ENCODE measurements at regions of chr1 and their contacts with region 1.

Region 1: GRCh38 chr1:27300341-27301051 is 21.5 kb upstream of the TMEM222 start:
- DNase-seq: peak; percentile 90
- CTCF ChIP-seq: peak; percentile 99

Region 2: GRCh38 chr1:27044613-27045151 is 255.8 kb before region 1 on chr1:
- CTCF ChIA-PET with region 1: interaction called, 11 read pairs
- POLR2A ChIA-PET with region 1: no interaction called
- DNase-seq: peak; percentile 87
- CTCF ChIP-seq: peak; percentile 99

Region 3: GRCh38 chr1:27111626-27112573 is 188.6 kb before region 1 on chr1:
- CTCF ChIA-PET with region 1: interaction called, 98 read pairs
- POLR2A ChIA-PET with region 1: no interaction called
- DNase-seq: peak; percentile 87
- CTCF ChIP-seq: peak; percentile 52

Region 4: DNA sequence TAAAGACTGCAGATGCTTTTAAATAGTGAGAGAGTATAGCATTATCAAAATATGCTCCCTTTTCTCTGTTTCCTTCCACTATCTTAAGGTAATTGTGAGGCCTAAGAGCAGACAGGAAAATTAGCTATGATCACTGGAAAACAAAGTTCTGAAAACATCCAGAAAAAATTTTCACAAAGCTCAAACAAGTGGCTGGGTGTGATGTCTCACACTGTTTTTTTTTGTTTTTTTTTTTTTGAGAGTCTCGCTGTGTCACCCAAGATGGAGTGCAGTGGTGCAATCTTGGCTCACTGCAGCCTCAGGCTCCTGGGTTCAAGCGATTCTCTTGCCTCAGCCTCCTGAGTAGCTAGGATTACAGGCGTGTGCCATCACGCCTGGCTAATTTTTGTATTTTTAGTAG is 58.8 kb before region 1 on chr1:
- CTCF ChIA-PET with region 1: interaction called, 11 read pairs
- POLR2A ChIA-PET with region 1: no interaction called
- DNase-seq: no peak
- CTCF ChIP-seq: no peak

Region 5: DNA sequence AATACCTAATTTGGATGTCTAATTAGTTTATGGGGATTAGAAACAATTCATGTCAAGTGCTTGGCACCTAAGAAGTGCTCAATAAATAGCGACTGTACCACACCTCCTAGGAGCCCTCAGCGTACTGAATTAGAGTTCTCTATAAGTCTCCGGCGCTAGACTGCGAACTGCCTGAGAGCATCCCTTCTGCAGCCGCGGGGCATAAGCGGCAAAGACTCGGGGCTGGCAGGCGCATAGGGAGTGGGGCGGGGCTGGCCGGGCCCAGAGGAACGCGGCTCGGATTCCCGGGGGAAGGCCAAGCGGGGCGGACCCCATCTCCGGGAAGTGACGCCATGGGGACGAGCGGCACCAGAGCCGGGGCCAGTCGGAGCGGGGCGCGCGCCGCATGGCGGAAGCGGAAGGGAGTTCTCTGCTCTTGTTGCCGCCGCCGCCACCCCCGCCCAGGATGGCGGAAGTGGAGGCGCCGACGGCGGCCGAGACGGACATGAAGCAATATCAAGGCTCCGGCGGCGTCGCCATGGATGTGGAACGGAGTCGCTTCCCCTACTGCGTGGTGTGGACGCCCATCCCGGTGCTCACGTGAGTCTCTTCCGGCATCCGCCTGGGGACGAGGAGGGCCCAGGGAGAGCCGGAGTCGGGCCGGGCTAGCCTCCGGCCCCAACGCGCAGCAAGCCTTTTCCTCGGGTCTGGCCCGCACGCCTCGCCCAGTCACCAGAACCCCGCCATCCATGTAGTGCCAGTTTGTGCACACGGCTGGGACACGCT is 21.5 kb after region 1 on chr1 and contains the start of gene TMEM222:
- CTCF ChIA-PET with region 1: interaction called, 234 read pairs
- POLR2A ChIA-PET with region 1: no interaction called
- DNase-seq: peak; percentile 99
- CTCF ChIP-seq: no peak

Region 6: DNA sequence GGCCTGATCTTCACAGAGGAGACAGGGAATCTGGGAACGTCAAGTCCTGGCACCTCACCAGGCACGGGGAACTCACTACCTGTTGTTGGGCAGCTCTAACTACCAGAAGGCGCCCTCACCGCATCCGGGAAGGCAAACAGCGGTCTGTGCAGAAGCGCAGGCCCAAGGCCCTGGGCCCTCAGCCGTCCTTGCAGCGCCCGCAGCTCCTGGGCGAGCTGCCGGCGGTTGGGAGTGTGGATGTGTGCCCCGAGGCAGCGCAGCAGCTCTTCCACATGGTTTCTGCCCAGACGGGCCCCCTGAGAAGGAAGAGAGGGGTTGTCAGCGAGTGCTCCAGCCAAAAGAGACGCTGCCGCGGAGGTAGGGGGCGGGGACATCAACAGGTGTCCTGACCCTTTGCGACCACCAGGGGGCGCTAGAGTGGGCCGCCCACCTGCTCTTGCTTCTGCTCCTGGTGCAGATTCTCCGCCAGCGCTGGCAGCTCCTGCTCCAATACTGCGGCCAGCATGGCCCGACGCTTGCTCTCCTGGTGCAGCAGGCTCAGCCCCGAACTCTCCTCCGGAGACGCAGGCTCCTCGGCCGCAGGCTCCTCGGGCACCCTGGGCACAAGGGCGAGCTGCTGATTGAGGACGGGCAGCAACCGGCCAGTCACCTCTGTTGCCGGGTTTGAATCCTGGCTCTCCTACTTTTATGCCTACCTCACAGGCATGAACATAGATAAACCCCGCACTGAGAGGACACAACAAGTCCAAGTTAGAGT is 57.0 kb after region 1 on chr1:
- CTCF ChIA-PET with region 1: interaction called, 26 read pairs
- POLR2A ChIA-PET with region 1: no interaction called
- DNase-seq: peak; percentile 93
- CTCF ChIP-seq: peak; percentile 97

Region 7: DNA sequence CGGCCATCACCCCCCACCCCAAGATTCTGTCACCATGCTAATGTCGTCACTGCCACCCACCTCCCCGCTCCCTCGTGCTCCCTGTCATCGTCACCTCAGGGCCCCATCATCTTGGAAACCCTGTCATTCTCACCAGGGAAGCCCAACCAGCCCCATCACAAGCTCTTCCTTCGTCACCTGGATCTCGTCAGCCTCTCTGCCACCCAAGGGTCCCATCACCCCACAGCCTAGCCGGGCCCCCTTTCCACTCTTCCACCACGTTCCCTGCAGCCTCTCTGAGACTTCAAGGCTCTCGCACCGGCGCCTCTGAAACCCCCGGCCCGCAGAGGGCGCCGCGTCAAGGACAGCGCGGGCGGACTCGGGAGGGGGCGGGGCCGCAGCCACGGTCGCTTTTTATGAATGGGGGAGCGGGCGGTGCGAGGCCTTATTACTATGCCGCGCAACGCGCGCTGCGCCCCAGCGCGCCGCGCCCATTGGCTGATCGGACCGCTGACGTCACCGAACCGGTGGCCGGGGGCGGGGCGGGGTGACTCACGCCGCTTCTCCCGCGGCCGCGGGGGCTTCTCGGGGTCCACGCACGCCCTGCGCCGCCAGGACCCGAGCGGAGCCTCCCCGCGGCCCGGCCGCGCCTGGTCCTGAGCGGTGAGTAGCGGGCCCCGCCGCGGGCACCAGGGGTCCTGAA is 91.7 kb after region 1 on chr1 and contains the start of gene GPR3:
- CTCF ChIA-PET with region 1: interaction called, 324 read pairs
- POLR2A ChIA-PET with region 1: interaction called, 6 read pairs
- DNase-seq: peak; percentile 94
- CTCF ChIP-seq: peak; percentile 57

Region 8: GRCh38 chr1:27489910-27490741 is 189.6 kb after region 1 on chr1 and contains the start of gene WASF2:
- CTCF ChIA-PET with region 1: no interaction called
- POLR2A ChIA-PET with region 1: no interaction called
- DNase-seq: peak; percentile 93
- CTCF ChIP-seq: no peak